Mammary epithelial cell (primary cell): ENCODE measurements at regions of chr1 and their contacts with region 1.

Region 1: DNA sequence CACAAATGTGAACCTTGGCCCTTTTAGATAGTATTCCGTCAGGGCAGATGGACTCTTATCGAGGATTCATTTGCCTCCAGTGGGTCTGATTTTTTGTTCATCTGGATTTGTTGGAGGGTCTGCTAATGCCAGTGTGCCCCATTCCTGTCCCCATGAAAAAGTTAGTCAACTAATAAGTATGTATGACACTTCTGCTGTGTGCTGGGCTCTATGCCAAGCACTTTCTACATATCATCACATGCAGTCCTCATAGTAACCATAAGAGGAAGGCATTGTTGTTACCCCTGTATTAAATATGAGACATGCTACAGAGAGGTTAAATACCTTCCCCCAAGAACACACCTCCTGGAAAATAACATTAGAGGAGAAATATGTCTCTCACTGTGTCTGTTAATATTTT is 46.6 kb upstream of the MAB21L3 start:
- DNase-seq: peak; percentile 17
- H3K4me3 ChIP-seq: no peak overlapping the region
- H3K27ac ChIP-seq: no peak overlapping the region
- H3K4me1 ChIP-seq: peaks cover 10% of the 10 kb centered on the region
- H3K27me3 ChIP-seq: no peaks in the 10 kb centered on the region
- CTCF ChIP-seq: no peak

Region 2: GRCh38 chr1:116024626-116025025 is 40.0 kb before region 1 on chr1:
- CTCF ChIA-PET with region 1: no interaction called
- dilution Hi-C with region 1: no loop called
- in situ Hi-C with region 1: no loop called
- intact Hi-C with region 1: no loop called
- DNase-seq: no peak
- H3K4me3 ChIP-seq: no peak overlapping the region
- H3K27ac ChIP-seq: no peak overlapping the region
- H3K4me1 ChIP-seq: no peaks in the 10 kb centered on the region
- H3K27me3 ChIP-seq: no peaks in the 10 kb centered on the region
- CTCF ChIP-seq: no peak

Region 3: GRCh38 chr1:116110567-116111523 is 46.2 kb after region 1 on chr1 and contains the start of gene MAB21L3:
- CTCF ChIA-PET with region 1: no interaction called
- dilution Hi-C with region 1: loop called (anchors 5 kb)
- in situ Hi-C with region 1: no loop called
- intact Hi-C with region 1: no loop called
- DNase-seq: no peak
- H3K4me3 ChIP-seq: no peak within 1 kb of the TSS
- H3K27ac ChIP-seq: no peak within 1 kb of the TSS
- H3K4me1 ChIP-seq: peaks cover 4% of the 10 kb centered on the region
- H3K27me3 ChIP-seq: no peaks in the 10 kb centered on the region
- CTCF ChIP-seq: no peak
- total RNA-seq, gene MAB21L3: 1.0 to 1.4 TPM

Region 4: GRCh38 chr1:116151739-116152576 is 87.3 kb after region 1 on chr1:
- CTCF ChIA-PET with region 1: no interaction called
- dilution Hi-C with region 1: no loop called
- in situ Hi-C with region 1: no loop called
- intact Hi-C with region 1: no loop called
- DNase-seq: peak; percentile 73
- H3K4me3 ChIP-seq: peak overlapping the region; percentile 34 to 49 (median 36)
- H3K27ac ChIP-seq: no peak overlapping the region
- H3K4me1 ChIP-seq: peaks cover 4% of the 10 kb centered on the region
- H3K27me3 ChIP-seq: no peaks in the 10 kb centered on the region
- CTCF ChIP-seq: peak; percentile 65 to 93